CD8-positive, alpha-beta T cell (primary cell): ENCODE measurements at regions of chr12 and their contacts with region 1.

Region 1: DNA sequence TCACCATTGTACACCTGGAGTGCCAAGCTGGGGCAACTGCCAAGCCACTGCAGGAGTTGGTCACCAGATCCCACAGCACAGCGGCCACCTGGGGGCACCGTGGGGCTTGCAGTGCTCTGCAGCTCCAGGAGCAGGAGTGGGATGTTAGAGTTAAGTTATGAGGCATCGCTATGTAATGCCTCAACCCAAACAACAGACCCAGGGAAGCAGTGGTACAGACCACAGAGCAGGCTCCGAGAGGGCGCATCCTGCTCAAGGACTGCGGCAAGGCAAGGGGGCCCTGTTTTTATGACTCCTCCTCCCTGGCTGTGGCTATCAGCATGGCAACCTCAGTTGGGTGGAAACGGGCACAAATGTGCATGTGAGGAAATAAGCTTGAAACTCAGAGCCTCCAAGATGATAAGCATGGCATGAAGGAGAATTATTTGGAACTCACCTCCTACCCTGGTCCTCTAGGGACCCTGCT is 63.1 kb downstream of the ARL6IP4 start:
- DNase-seq: peak; percentile 37 to 88 (median 73)
- ATAC-seq: peak; percentile 98
- H3K4me3 ChIP-seq: no peak overlapping the region
- H3K4me3 Mint-ChIP-seq: peak overlapping the region; percentile 37
- H3K27ac ChIP-seq: peak overlapping the region; percentile 43 to 48
- H3K27ac Mint-ChIP-seq: peak overlapping the region; percentile 91
- H3K4me1 ChIP-seq: peaks cover 18% of the 10 kb centered on the region
- H3K4me1 Mint-ChIP-seq: peaks cover 30% of the 10 kb centered on the region
- H3K27me3 ChIP-seq: no peaks in the 10 kb centered on the region
- H3K27me3 Mint-ChIP-seq: no peaks in the 10 kb centered on the region
- CTCF ChIP-seq: peak; percentile 58

Region 2: DNA sequence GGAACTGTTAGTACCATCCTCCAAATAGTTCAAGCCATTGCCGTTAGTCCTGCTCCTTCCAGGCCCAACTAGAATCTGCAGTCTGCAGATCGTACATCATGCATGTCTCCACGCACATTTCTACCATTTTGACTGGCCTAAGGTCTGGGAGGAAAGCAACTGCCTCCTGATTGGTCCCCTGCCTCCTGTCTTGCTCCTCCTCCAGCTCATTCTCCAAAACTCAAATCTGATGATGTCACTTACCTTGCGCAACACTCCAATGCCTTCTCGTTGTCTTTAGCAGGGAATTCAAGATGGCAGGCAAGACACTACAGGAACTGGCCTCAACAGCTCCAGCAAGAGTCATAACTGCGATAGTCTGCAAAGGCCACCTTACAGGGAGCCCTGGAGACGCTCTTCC is 303.2 kb before region 1 on chr12:
- CTCF ChIA-PET with region 1: no interaction called
- POLR2A ChIA-PET with region 1: no interaction called
- intact Hi-C with region 1: no loop called
- DNase-seq: no peak
- ATAC-seq: no peak
- H3K4me3 ChIP-seq: no peak overlapping the region
- H3K4me3 Mint-ChIP-seq: no peak overlapping the region
- H3K27ac ChIP-seq: no peak overlapping the region
- H3K27ac Mint-ChIP-seq: no peak overlapping the region
- H3K4me1 ChIP-seq: no peaks in the 10 kb centered on the region
- H3K4me1 Mint-ChIP-seq: no peaks in the 10 kb centered on the region
- H3K27me3 ChIP-seq: no peaks in the 10 kb centered on the region
- H3K27me3 Mint-ChIP-seq: no peaks in the 10 kb centered on the region
- CTCF ChIP-seq: no peak

Region 3: GRCh38 chr12:123032736-123033391 is 10.7 kb before region 1 on chr12:
- CTCF ChIA-PET with region 1: interaction called, 13 read pairs
- POLR2A ChIA-PET with region 1: no interaction called
- intact Hi-C with region 1: no loop called
- DNase-seq: no peak
- ATAC-seq: no peak
- H3K4me3 ChIP-seq: no peak overlapping the region
- H3K4me3 Mint-ChIP-seq: no peak overlapping the region
- H3K27ac ChIP-seq: no peak overlapping the region
- H3K27ac Mint-ChIP-seq: peak overlapping the region; percentile 62
- H3K4me1 ChIP-seq: peaks cover 24% of the 10 kb centered on the region
- H3K4me1 Mint-ChIP-seq: peaks cover 31% of the 10 kb centered on the region
- H3K27me3 ChIP-seq: no peaks in the 10 kb centered on the region
- H3K27me3 Mint-ChIP-seq: no peaks in the 10 kb centered on the region
- CTCF ChIP-seq: no peak

Region 4: GRCh38 chr12:123120452-123121166 is 77.0 kb after region 1 on chr12:
- CTCF ChIA-PET with region 1: interaction called, 8 read pairs
- POLR2A ChIA-PET with region 1: no interaction called
- intact Hi-C with region 1: loop called in 1 of 2 experiments (anchors 5 kb)
- DNase-seq: peak in 6 of 9 experiments; percentile 23 to 72 (median 36)
- ATAC-seq: peak; percentile 48
- H3K4me3 ChIP-seq: peak overlapping the region in 1 of 2 experiments; percentile 20
- H3K4me3 Mint-ChIP-seq: peak overlapping the region; percentile 60
- H3K27ac ChIP-seq: peak overlapping the region; percentile 58 to 72
- H3K27ac Mint-ChIP-seq: peak overlapping the region; percentile 98
- H3K4me1 ChIP-seq: peaks cover 51% of the 10 kb centered on the region
- H3K4me1 Mint-ChIP-seq: peaks cover 66% of the 10 kb centered on the region
- H3K27me3 ChIP-seq: no peaks in the 10 kb centered on the region
- H3K27me3 Mint-ChIP-seq: no peaks in the 10 kb centered on the region
- CTCF ChIP-seq: no peak

Region 5: GRCh38 chr12:123200414-123200813 is 156.8 kb after region 1 on chr12:
- CTCF ChIA-PET with region 1: interaction called, 3 read pairs
- POLR2A ChIA-PET with region 1: no interaction called
- intact Hi-C with region 1: loop called in 1 of 2 experiments (anchors 1 kb)
- DNase-seq: peak in 2 of 9 experiments; percentile 13 to 25
- ATAC-seq: peak; percentile 48
- H3K4me3 ChIP-seq: no peak overlapping the region
- H3K4me3 Mint-ChIP-seq: peak overlapping the region; percentile 2
- H3K27ac ChIP-seq: peak overlapping the region; percentile 12 to 36
- H3K27ac Mint-ChIP-seq: peak overlapping the region; percentile 84
- H3K4me1 ChIP-seq: peaks cover 9% of the 10 kb centered on the region
- H3K4me1 Mint-ChIP-seq: peaks cover 20% of the 10 kb centered on the region
- H3K27me3 ChIP-seq: no peaks in the 10 kb centered on the region
- H3K27me3 Mint-ChIP-seq: no peaks in the 10 kb centered on the region
- CTCF ChIP-seq: no peak